CD4-positive, alpha-beta memory T cell (primary cell): ENCODE measurements at regions of chr7 and their contacts with region 1.

Region 1: GRCh38 chr7:2863461-2864066 is 19.5 kb upstream of the GNA12 start:
- DNase-seq: peak; percentile 57 to 79 (median 64)
- H3K4me3 ChIP-seq: peak overlapping the region in 1 of 2 donors; percentile 42
- H3K4me3 Mint-ChIP-seq: peak overlapping the region; percentile 64 to 88 (median 78)
- H3K27ac ChIP-seq: peak overlapping the region; percentile 54
- H3K27ac Mint-ChIP-seq: peak overlapping the region; percentile 56 to 97 (median 94)
- H3K4me1 ChIP-seq: peaks cover 28% of the 10 kb centered on the region
- H3K4me1 Mint-ChIP-seq: peaks cover 15 to 28% (median 24%) of the 10 kb centered on the region in 4 donors
- H3K27me3 ChIP-seq: no peaks in the 10 kb centered on the region
- H3K27me3 Mint-ChIP-seq: no peaks in the 10 kb centered on the region

Region 2: DNA sequence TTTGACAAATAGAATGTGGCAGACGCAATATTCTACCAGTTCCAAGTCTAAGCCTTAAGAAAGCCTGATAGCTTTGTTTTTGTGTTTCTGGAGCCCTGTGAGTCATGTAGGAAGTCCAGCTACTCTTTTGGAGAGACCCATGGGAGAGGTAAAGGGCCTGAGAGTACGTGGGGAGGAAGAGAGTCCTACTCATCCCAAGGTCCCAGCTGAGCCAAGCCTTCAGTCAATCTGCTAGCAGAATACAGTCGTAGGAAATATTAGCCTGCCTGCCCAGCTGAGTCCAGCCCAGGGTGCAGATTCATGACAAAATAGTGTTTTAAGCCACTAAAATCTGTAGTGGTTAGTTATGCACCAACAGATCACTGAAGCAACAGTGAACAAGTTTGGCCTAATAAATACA is 10.4 kb before region 1 on chr7:
- CTCF ChIA-PET with region 1: interaction called, 15 read pairs
- POLR2A ChIA-PET with region 1: no interaction called
- intact Hi-C with region 1: no loop called
- DNase-seq: no peak
- H3K4me3 ChIP-seq: no peak overlapping the region
- H3K4me3 Mint-ChIP-seq: no peak overlapping the region
- H3K27ac ChIP-seq: no peak overlapping the region
- H3K27ac Mint-ChIP-seq: no peak overlapping the region
- H3K4me1 ChIP-seq: peaks cover 8% of the 10 kb centered on the region
- H3K4me1 Mint-ChIP-seq: peaks cover 4 to 7% (median 6%) of the 10 kb centered on the region in 4 donors
- H3K27me3 ChIP-seq: no peaks in the 10 kb centered on the region
- H3K27me3 Mint-ChIP-seq: no peaks in the 10 kb centered on the region

Region 3: GRCh38 chr7:2956526-2957368 is 93.2 kb after region 1 on chr7:
- CTCF ChIA-PET with region 1: interaction called, 3 read pairs
- POLR2A ChIA-PET with region 1: no interaction called
- intact Hi-C with region 1: loop called (anchors 10 kb)
- DNase-seq: peak in 1 of 5 donors; percentile 61
- H3K4me3 ChIP-seq: no peak overlapping the region
- H3K4me3 Mint-ChIP-seq: no peak overlapping the region
- H3K27ac ChIP-seq: no peak overlapping the region
- H3K27ac Mint-ChIP-seq: peak overlapping the region in 6 of 7 donors; percentile 21 to 84 (median 59)
- H3K4me1 ChIP-seq: peaks cover 60% of the 10 kb centered on the region
- H3K4me1 Mint-ChIP-seq: peaks cover 32 to 75% (median 54%) of the 10 kb centered on the region in 4 donors
- H3K27me3 ChIP-seq: no peaks in the 10 kb centered on the region
- H3K27me3 Mint-ChIP-seq: no peaks in the 10 kb centered on the region

Region 4: DNA sequence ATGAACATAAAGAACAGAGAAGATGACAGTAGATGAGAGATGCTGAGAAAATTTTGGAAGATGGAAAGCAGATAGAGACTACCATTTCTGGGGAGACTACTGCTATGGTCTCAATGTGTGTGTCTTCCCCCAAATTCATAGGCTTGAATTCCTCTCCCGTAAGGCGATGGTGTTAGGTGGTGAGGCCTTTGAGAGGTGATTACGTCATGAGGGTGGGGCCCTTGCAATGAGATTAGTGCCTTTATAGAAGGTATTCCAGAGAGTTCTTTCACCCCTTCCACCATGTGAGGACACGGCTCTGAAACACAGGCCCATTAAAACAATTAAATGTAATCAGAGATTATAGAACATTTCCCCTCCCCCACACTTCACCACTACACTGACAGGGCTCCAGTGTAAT is 156.2 kb after region 1 on chr7:
- CTCF ChIA-PET with region 1: no interaction called
- POLR2A ChIA-PET with region 1: no interaction called
- intact Hi-C with region 1: no loop called
- DNase-seq: no peak
- H3K4me3 ChIP-seq: no peak overlapping the region
- H3K4me3 Mint-ChIP-seq: no peak overlapping the region
- H3K27ac ChIP-seq: no peak overlapping the region
- H3K27ac Mint-ChIP-seq: peak overlapping the region in 2 of 7 donors; percentile 53 to 61
- H3K4me1 ChIP-seq: no peaks in the 10 kb centered on the region
- H3K4me1 Mint-ChIP-seq: peaks cover 19 to 57% (median 41%) of the 10 kb centered on the region in 4 donors
- H3K27me3 ChIP-seq: no peaks in the 10 kb centered on the region
- H3K27me3 Mint-ChIP-seq: no peaks in the 10 kb centered on the region

Region 5: GRCh38 chr7:3065724-3066143 is 202.2 kb after region 1 on chr7:
- CTCF ChIA-PET with region 1: interaction called, 28 read pairs
- POLR2A ChIA-PET with region 1: no interaction called
- intact Hi-C with region 1: loop called (anchors 1 kb)
- DNase-seq: peak; percentile 56 to 71 (median 60)
- H3K4me3 ChIP-seq: no peak overlapping the region
- H3K4me3 Mint-ChIP-seq: peak overlapping the region; percentile 17 to 90 (median 78)
- H3K27ac ChIP-seq: peak overlapping the region; percentile 14
- H3K27ac Mint-ChIP-seq: peak overlapping the region; percentile 72 to 98 (median 90)
- H3K4me1 ChIP-seq: peaks cover 81% of the 10 kb centered on the region
- H3K4me1 Mint-ChIP-seq: peaks cover 57 to 89% (median 71%) of the 10 kb centered on the region in 4 donors
- H3K27me3 ChIP-seq: no peaks in the 10 kb centered on the region
- H3K27me3 Mint-ChIP-seq: no peaks in the 10 kb centered on the region

Region 6: DNA sequence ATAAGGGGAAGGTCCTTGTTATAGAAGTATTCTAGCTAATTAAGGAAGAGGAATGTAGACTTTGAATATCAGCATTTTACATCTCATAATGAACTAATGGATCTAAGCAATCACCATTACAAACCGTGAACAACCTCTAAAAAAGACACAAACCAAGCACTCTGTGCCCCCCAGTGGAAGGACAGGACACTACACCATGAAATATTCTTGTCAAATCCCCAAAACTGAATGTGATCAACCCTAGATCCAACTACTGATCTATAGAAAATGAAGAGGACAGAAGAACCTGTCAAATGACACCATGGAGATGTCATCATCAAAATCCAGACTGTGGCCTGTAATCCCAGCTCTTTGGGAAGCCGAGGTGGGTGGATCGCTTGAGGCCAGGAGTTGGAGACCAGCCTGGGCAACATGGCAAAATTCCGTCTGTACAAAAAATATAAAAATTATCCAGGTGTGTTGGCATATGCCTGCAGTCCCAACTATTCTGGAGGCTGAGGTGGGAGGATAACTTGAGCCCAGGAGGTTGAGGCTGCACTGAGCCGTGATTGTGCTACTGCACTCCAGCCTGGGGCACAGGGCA is 291.4 kb after region 1 on chr7:
- CTCF ChIA-PET with region 1: interaction called, 49 read pairs
- POLR2A ChIA-PET with region 1: no interaction called
- intact Hi-C with region 1: loop called (anchors 1 kb)
- DNase-seq: peak; percentile 64 to 74 (median 66)
- H3K4me3 ChIP-seq: no peak overlapping the region
- H3K4me3 Mint-ChIP-seq: no peak overlapping the region
- H3K27ac ChIP-seq: no peak overlapping the region
- H3K27ac Mint-ChIP-seq: peak overlapping the region in 2 of 7 donors; percentile 1 to 13
- H3K4me1 ChIP-seq: no peaks in the 10 kb centered on the region
- H3K4me1 Mint-ChIP-seq: peaks cover 6 to 18% (median 8%) of the 10 kb centered on the region in 4 donors
- H3K27me3 ChIP-seq: no peaks in the 10 kb centered on the region
- H3K27me3 Mint-ChIP-seq: peaks cover 0 to 1% of the 10 kb centered on the region in 2 donors

Region 7: DNA sequence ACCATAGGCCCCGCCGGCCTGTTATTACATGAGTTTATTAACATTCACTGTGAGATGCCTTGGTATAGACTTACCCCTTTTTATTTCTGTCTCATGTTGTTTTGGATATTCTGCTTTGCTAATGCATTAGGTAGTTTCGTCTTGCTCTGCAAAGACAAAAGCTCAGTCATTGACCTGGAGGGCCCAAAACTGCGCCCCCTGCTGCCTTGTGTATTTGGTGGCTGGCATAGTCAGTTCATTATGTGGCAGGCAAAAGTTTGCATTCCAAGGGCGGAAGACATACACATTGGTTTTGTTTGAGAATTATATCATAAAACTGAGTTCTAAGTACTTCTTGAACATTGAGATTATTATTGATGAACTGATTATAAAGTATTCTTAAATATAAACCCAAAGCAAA is 810.0 kb after region 1 on chr7:
- CTCF ChIA-PET with region 1: interaction called, 5 read pairs
- POLR2A ChIA-PET with region 1: no interaction called
- intact Hi-C with region 1: loop called (anchors 5 kb)
- DNase-seq: peak in 4 of 5 donors; percentile 37 to 44 (median 41)
- H3K4me3 ChIP-seq: no peak overlapping the region
- H3K4me3 Mint-ChIP-seq: no peak overlapping the region
- H3K27ac ChIP-seq: no peak overlapping the region
- H3K27ac Mint-ChIP-seq: no peak overlapping the region
- H3K4me1 ChIP-seq: no peaks in the 10 kb centered on the region
- H3K4me1 Mint-ChIP-seq: no peaks in the 10 kb centered on the region
- H3K27me3 ChIP-seq: no peaks in the 10 kb centered on the region
- H3K27me3 Mint-ChIP-seq: peaks cover 0 to 3% of the 10 kb centered on the region in 2 donors

Region 8: DNA sequence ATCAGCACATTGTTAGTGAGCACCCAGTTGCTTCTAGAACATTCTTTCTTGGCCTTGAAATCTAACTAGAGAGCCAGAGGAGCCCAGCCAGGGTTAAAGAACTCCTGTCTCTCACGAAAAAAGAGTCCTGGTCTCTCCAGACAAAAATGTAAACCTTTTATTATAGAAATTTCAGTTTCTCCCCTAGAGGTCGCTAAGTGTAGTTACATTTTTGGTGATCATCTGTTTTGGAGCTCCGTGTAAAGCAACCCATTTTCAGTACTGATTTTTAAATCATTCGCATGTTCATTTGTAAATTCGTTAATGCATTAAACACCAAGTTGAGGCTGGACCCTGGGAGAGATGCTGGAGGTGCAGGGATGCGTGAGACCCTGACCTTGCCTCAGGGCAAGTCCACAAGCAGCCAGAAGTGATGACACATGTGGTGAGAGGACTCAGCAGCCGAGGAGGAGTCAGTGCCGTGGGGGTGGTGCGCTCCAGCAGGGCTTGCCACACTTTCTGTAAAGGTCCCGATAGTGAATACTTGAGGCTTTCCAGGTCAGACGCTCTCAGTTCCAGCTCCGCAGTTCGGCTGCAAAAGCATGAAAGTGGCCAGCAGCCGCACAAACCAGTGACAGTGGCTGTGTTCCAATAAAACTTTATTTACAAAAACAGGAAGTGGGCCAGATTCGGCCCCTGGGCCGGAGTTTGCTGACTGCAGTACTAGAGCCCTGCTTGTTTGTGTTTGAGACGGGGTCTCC is 1240.0 kb after region 1 on chr7:
- CTCF ChIA-PET with region 1: no interaction called
- POLR2A ChIA-PET with region 1: no interaction called
- intact Hi-C with region 1: no loop called
- DNase-seq: no peak
- H3K4me3 ChIP-seq: no peak overlapping the region
- H3K4me3 Mint-ChIP-seq: no peak overlapping the region
- H3K27ac ChIP-seq: no peak overlapping the region
- H3K27ac Mint-ChIP-seq: no peak overlapping the region
- H3K4me1 ChIP-seq: no peaks in the 10 kb centered on the region
- H3K4me1 Mint-ChIP-seq: no peaks in the 10 kb centered on the region
- H3K27me3 ChIP-seq: no peaks in the 10 kb centered on the region
- H3K27me3 Mint-ChIP-seq: peaks cover 3 to 6% of the 10 kb centered on the region in 2 donors